K562 (cell line): ENCODE measurements at regions of chr22 and their contacts with region 1.

Region 1: DNA sequence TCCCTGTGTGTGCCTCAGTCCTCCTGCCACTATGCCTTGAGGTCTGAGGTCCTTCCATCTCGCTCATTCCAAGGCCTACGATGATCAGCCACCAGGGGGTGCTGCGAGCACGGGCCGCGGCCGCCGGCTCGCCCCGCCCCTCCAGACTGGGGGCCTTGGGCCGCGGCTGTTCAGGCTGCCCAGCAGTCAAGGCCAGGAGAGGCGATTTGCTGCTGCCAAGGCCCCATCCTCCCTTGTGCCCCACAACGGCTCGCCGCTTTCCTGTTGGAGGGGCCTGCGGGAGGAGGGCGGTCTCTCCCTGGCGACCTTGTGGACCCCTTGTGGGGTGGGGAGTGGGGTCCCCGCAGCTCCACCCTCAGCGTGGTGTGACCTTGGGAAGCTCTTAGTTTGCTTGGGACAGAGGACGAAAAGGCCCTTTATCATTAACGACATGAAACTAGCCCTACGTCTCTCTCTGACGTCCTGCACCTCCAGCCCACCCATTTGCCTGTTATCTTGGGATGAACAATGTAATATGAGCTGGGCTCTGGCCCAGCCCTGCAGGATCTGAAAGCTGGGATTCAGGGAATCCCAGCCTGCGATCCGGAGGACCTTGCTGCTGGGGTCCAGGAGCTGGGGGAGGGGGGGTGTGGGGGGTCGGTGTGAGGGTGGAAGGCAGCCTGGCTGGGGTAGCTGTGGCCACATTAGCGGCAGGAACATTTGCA is 5.3 kb upstream of the GALR3 start:
- DNase-seq: peak; percentile 82 to 86 (median 83)
- ATAC-seq: peak; percentile 97
- H3K4me3 ChIP-seq: no peak overlapping the region
- H3K27ac ChIP-seq: peak overlapping the region; percentile 69
- H3K4me1 ChIP-seq: peaks cover 7 to 14% of the 10 kb centered on the region in 2 experiments; a peak in 4 of 5 replicates
- H3K27me3 ChIP-seq: no peaks in the 10 kb centered on the region
- CTCF ChIP-seq: peak; percentile 88 to 91 (median 88)
- EP300 ChIP-seq: no peak
- POLR2A ChIP-seq: no peak
- RAD21 ChIP-seq: peak; percentile 80 to 87

Region 2: DNA sequence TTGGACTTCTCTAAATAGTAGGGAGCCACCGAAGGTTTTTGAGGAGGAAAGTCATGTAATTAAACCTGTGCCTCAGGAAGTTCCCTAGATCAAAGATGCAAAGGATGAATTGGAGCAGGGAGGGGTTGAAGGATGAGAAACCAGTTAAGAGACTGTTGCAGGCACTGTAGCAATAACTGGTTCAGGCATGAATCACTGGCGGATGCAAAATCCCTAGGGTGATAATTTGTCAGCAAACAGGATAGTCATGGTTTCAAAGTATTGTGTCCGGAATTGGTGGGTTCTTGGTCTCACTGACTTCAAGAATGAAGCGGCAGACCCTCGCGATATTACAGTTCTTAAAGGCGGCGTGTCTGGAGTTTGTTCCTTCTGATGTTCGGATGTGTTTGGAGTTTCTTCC is 101.1 kb before region 1 on chr22:
- CTCF ChIA-PET with region 1: no interaction called
- POLR2A ChIA-PET with region 1: no interaction called
- in situ Hi-C with region 1: no loop called
- intact Hi-C with region 1: no loop called
- DNase-seq: no peak
- ATAC-seq: no peak
- H3K4me3 ChIP-seq: no peak overlapping the region
- H3K27ac ChIP-seq: no peak overlapping the region
- H3K4me1 ChIP-seq: peaks cover 0 to 4% of the 10 kb centered on the region in 2 experiments; a peak in 2 of 5 replicates
- H3K27me3 ChIP-seq: no peaks in the 10 kb centered on the region
- CTCF ChIP-seq: no peak
- EP300 ChIP-seq: no peak
- POLR2A ChIP-seq: no peak
- RAD21 ChIP-seq: no peak

Region 3: DNA sequence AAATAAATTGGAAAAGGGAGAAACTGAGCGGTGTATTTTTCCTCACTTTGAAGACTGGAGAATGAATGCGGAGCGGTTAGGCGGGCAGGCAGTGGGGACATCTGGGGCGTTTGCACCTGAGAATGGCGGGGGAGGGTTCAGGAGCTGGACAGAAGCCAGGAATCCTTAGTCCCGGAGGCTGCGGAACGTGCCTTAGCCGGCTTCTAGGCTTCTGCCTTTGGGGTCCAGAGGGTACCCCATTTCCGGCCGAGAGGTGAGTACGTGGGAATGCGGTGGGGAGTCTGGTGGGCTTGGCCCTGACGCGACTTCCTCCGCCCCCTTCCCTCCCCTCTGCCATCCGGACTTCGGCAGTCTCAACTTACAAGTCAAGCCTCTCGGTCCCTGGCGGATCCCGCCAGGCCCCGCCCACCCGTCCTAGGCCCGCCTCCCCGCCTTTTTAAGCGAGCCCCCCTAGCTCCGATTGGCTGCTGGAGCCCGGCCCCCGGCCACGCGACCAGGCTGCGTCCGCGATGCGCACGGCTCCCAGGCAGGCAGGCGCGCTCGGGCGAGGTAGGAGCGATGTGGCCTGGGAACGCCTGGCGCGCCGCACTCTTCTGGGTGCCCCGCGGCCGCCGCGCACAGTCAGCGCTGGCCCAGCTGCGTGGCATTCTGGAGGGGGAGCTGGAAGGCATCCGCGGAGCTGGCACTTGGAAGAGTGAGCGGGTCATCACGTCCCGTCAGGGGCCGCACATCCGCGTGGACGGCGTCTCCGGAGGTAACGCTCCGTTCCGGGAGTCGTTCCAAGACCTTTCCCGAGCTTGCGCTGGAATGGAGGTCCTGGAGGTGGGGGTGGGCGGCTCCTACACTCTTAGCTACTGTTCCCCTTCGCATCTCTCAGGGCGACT is 10.2 kb before region 1 on chr22 and contains the start of gene GCAT:
- CTCF ChIA-PET with region 1: no interaction called
- POLR2A ChIA-PET with region 1: interaction called, 34 read pairs
- in situ Hi-C with region 1: no loop called
- intact Hi-C with region 1: no loop called
- DNase-seq: peak; percentile 97
- ATAC-seq: peak; percentile 93
- H3K4me3 ChIP-seq: peak within 1 kb of the TSS; percentile 64
- H3K27ac ChIP-seq: peak within 1 kb of the TSS; percentile 69
- H3K4me1 ChIP-seq: peaks cover 32 to 50% of the 10 kb centered on the region in 2 experiments
- H3K27me3 ChIP-seq: no peaks in the 10 kb centered on the region
- CTCF ChIP-seq: no peak
- EP300 ChIP-seq: no peak
- POLR2A ChIP-seq: peak; percentile 81
- RAD21 ChIP-seq: no peak
- polyA plus RNA-seq, gene GCAT: 1.9 to 5.3 TPM

Region 4: GRCh38 chr22:37862570-37863325 is 44.9 kb after region 1 on chr22:
- CTCF ChIA-PET with region 1: interaction called, 9 read pairs
- POLR2A ChIA-PET with region 1: interaction called, 5 read pairs
- in situ Hi-C with region 1: no loop called
- intact Hi-C with region 1: loop called (anchors 1 kb)
- DNase-seq: no peak
- ATAC-seq: no peak
- H3K4me3 ChIP-seq: no peak overlapping the region
- H3K27ac ChIP-seq: no peak overlapping the region
- H3K4me1 ChIP-seq: no peaks in the 10 kb centered on the region; a peak in 1 of 5 replicates
- H3K27me3 ChIP-seq: no peaks in the 10 kb centered on the region
- CTCF ChIP-seq: no peak
- EP300 ChIP-seq: no peak
- POLR2A ChIP-seq: no peak
- RAD21 ChIP-seq: no peak

Region 5: DNA sequence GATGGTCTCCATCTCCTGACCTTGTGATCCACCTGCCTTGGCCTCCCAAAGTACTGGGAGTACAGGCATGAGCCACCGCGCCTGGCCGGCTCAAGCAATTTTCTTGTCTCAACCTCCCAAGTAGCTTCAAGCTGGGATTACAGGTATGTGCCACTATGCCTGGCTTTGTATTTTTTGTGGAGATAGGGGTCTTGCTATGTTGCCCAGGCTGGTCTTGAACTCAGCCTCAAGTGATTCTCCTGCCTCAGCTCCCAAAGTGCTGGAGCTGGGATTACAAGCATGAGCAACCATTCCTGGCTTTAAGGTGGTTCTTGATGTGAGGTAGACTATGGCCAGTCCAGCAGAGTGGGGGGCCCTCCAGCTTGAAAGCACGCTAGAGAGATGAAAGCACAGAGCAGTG is 143.2 kb after region 1 on chr22:
- CTCF ChIA-PET with region 1: interaction called, 12 read pairs
- POLR2A ChIA-PET with region 1: no interaction called
- in situ Hi-C with region 1: loop called (anchors 5 kb)
- intact Hi-C with region 1: loop called (anchors 1 kb)
- DNase-seq: no peak
- ATAC-seq: no peak
- H3K4me3 ChIP-seq: no peak overlapping the region
- H3K27ac ChIP-seq: no peak overlapping the region
- H3K4me1 ChIP-seq: no peaks in the 10 kb centered on the region
- H3K27me3 ChIP-seq: no peaks in the 10 kb centered on the region
- CTCF ChIP-seq: no peak
- EP300 ChIP-seq: no peak
- POLR2A ChIP-seq: no peak
- RAD21 ChIP-seq: no peak

Region 6: GRCh38 chr22:37965940-37966664 is 148.2 kb after region 1 on chr22:
- CTCF ChIA-PET with region 1: interaction called, 12 read pairs
- POLR2A ChIA-PET with region 1: no interaction called
- in situ Hi-C with region 1: loop called (anchors 5 kb)
- intact Hi-C with region 1: loop called (anchors 1 kb)
- DNase-seq: no peak
- ATAC-seq: no peak
- H3K4me3 ChIP-seq: no peak overlapping the region
- H3K27ac ChIP-seq: no peak overlapping the region
- H3K4me1 ChIP-seq: no peaks in the 10 kb centered on the region
- H3K27me3 ChIP-seq: no peaks in the 10 kb centered on the region
- CTCF ChIP-seq: no peak
- EP300 ChIP-seq: no peak
- POLR2A ChIP-seq: no peak
- RAD21 ChIP-seq: no peak

Region 7: GRCh38 chr22:38167988-38168431 is 350.2 kb after region 1 on chr22:
- CTCF ChIA-PET with region 1: no interaction called
- POLR2A ChIA-PET with region 1: no interaction called
- in situ Hi-C with region 1: no loop called
- intact Hi-C with region 1: no loop called
- DNase-seq: no peak
- ATAC-seq: peak; percentile 56
- H3K4me3 ChIP-seq: no peak overlapping the region
- H3K27ac ChIP-seq: no peak overlapping the region
- H3K4me1 ChIP-seq: peaks cover 22 to 55% of the 10 kb centered on the region in 2 experiments; a peak in 4 of 5 replicates
- H3K27me3 ChIP-seq: no peaks in the 10 kb centered on the region
- CTCF ChIP-seq: no peak
- EP300 ChIP-seq: no peak
- POLR2A ChIP-seq: no peak
- RAD21 ChIP-seq: no peak

Region 8: GRCh38 chr22:38214256-38215056 is 396.6 kb after region 1 on chr22:
- CTCF ChIA-PET with region 1: no interaction called
- POLR2A ChIA-PET with region 1: no interaction called
- in situ Hi-C with region 1: no loop called
- intact Hi-C with region 1: no loop called
- DNase-seq: peak; percentile 86 to 94 (median 92)
- ATAC-seq: peak; percentile 94
- H3K4me3 ChIP-seq: peak overlapping the region; percentile 24; the same call in 1 of the 2 replicates
- H3K27ac ChIP-seq: peak overlapping the region; percentile 38; the same call in 1 of the 3 replicates
- H3K4me1 ChIP-seq: peaks cover 10 to 31% of the 10 kb centered on the region in 2 experiments; a peak in 4 of 5 replicates
- H3K27me3 ChIP-seq: no peaks in the 10 kb centered on the region
- CTCF ChIP-seq: peak in 2 of 3 experiments; percentile 44 to 62; a peak in 4 of 6 replicates
- EP300 ChIP-seq: no peak
- POLR2A ChIP-seq: no peak
- RAD21 ChIP-seq: peak in 1 of 2 experiments; percentile 50; a peak in 3 of 4 replicates